MCF 10A (cell line): ENCODE measurements at regions of chr3 and their contacts with region 1.

Region 1: DNA sequence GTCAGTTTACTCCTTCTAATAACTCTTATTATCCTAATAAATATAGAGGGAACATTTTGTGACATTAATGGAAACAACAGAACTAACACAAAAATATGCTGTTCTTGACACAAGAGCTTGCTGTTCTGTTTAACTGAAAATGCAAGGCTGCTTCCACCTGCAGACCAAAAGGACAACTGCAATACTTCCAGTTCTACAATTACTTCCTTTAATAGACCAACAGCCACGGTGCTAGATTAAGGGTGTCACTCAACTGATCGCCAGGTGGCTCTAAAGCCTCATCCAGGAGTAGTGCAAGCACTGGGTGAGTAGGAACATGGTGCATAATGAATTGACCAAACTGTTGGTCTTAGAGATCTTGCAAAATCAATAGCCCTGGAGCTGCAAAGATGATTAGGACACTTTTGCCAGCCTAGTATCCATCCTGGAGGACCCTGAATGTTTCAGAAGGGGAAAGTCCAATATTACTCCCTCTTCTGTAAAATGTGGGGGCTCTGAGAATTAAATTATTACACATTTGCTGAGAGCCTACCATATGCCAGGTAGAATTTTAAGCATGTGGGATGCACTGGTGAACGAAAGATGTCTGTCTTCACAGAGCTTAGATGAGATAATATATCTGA is 3.6 kb upstream of the CLDN16 start:
- DNase-seq: peak; percentile 93
- H3K4me3 Mint-ChIP-seq: no peak overlapping the region
- H3K27ac Mint-ChIP-seq: peak overlapping the region; percentile 97
- H3K4me1 Mint-ChIP-seq: peaks cover 50% of the 10 kb centered on the region
- H3K27me3 Mint-ChIP-seq: no peaks in the 10 kb centered on the region
- CTCF ChIP-seq: peak; percentile 88

Region 2: DNA sequence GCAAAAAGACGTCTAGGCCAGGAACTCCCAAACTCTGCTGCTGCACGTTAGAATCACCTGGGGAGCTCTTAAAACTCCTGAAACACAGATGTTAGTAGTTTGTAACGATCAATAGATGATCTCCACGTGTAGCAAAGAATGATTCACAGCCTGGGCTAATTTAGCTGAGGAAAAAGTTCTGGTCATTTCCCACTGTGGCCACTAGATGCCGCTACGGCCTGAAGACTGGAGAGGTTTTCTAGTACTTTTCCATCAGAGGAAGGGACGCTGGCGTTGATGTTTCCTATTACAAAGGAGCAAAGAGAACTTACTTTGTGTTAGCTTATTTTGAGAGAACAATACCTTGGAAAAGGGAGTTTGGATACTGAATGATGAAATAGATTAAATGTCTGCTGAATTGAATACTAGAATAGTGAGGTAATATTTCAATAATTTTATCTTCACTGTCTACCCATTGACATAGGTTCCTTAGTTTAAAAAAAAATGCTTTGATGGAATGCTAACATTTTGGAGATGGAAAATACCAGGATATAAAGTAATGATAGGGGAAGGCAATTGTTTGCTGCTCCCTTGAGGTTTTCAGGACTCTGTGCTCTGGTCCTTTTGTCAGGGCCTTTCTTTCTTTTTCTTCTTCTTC is 422.7 kb before region 1 on chr3:
- CTCF ChIA-PET with region 1: interaction called, 10 read pairs
- POLR2A ChIA-PET with region 1: interaction called, 5 read pairs
- intact Hi-C with region 1: loop called (anchors 1 kb)
- DNase-seq: peak; percentile 88
- H3K4me3 Mint-ChIP-seq: no peak overlapping the region
- H3K27ac Mint-ChIP-seq: no peak overlapping the region
- H3K4me1 Mint-ChIP-seq: peaks cover 7% of the 10 kb centered on the region
- H3K27me3 Mint-ChIP-seq: no peaks in the 10 kb centered on the region
- CTCF ChIP-seq: peak; percentile 91

Region 3: DNA sequence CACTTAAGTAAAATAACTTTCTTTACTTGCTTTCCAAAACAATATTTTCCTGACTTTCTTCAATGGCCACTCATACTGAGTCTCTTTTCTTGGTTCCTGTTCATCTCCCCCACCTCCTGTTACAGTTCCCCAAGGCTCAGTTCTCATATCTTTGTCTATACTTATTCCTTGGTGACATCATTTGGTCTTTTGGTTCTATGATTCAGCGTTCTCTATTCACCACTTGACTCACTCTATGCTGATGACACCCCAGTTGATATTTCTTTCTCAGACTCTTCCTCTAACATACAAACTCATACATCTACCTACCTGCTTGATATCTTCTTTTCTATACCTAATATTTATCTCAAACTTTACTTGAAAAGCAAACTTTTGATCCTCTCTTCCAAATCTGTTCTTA is 178.6 kb before region 1 on chr3:
- CTCF ChIA-PET with region 1: interaction called, 6 read pairs
- POLR2A ChIA-PET with region 1: no interaction called
- intact Hi-C with region 1: loop called (anchors 1 kb)
- DNase-seq: peak; percentile 44
- H3K4me3 Mint-ChIP-seq: no peak overlapping the region
- H3K27ac Mint-ChIP-seq: peak overlapping the region; percentile 12
- H3K4me1 Mint-ChIP-seq: peaks cover 11% of the 10 kb centered on the region
- H3K27me3 Mint-ChIP-seq: no peaks in the 10 kb centered on the region
- CTCF ChIP-seq: no peak

Region 4: GRCh38 chr3:190321789-190322603 is 62.4 kb before region 1 on chr3 and contains the start of gene CLDN1:
- CTCF ChIA-PET with region 1: interaction called, 85 read pairs
- POLR2A ChIA-PET with region 1: interaction called, 104 read pairs
- intact Hi-C with region 1: loop called (anchors 1 kb)
- DNase-seq: peak; percentile 84
- H3K4me3 Mint-ChIP-seq: peak within 1 kb of the TSS; percentile 95
- H3K27ac Mint-ChIP-seq: peak within 1 kb of the TSS; percentile 96
- H3K4me1 Mint-ChIP-seq: peaks cover 51% of the 10 kb centered on the region
- H3K27me3 Mint-ChIP-seq: no peaks in the 10 kb centered on the region
- CTCF ChIP-seq: peak; percentile 92
- total RNA-seq, gene CLDN1: 197 and 263 TPM in 2 replicates

Region 5: DNA sequence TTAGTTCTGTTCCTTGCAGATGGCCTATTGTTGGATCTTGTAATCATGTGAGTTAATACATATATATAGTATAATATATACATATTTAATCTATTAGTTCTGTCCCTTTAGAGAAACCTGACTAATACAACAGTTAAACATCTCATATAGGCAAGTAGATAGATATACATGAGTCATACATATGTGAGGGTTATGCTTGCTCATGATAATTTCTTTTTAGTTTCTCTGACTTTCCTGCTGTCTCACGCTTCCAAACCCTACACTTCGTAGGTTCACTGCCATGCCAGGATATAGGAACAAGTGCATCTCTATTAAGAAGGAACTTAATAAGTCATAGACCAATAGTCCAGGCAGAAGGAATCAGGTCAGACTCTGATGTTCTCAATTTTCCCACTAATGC is 13.2 kb before region 1 on chr3:
- CTCF ChIA-PET with region 1: interaction called, 21 read pairs
- POLR2A ChIA-PET with region 1: interaction called, 59 read pairs
- intact Hi-C with region 1: no loop called
- DNase-seq: no peak
- H3K4me3 Mint-ChIP-seq: no peak overlapping the region
- H3K27ac Mint-ChIP-seq: peak overlapping the region; percentile 97
- H3K4me1 Mint-ChIP-seq: peaks cover 32% of the 10 kb centered on the region
- H3K27me3 Mint-ChIP-seq: no peaks in the 10 kb centered on the region
- CTCF ChIP-seq: no peak

Region 6: GRCh38 chr3:190513409-190514162 is 129.2 kb after region 1 on chr3 and contains the start of gene IL1RAP:
- CTCF ChIA-PET with region 1: interaction called, 6 read pairs
- POLR2A ChIA-PET with region 1: interaction called, 14 read pairs
- intact Hi-C with region 1: loop called (anchors 1 kb)
- DNase-seq: peak; percentile 95
- H3K4me3 Mint-ChIP-seq: peak within 1 kb of the TSS; percentile 88
- H3K27ac Mint-ChIP-seq: peak within 1 kb of the TSS; percentile 78
- H3K4me1 Mint-ChIP-seq: peaks cover 36% of the 10 kb centered on the region
- H3K27me3 Mint-ChIP-seq: no peaks in the 10 kb centered on the region
- CTCF ChIP-seq: peak; percentile 38
- total RNA-seq, gene IL1RAP: 46.5 and 62.0 TPM in 2 replicates